ENCODE measurements at regions of chr12 and their contacts with region 1.

Region 1: DNA sequence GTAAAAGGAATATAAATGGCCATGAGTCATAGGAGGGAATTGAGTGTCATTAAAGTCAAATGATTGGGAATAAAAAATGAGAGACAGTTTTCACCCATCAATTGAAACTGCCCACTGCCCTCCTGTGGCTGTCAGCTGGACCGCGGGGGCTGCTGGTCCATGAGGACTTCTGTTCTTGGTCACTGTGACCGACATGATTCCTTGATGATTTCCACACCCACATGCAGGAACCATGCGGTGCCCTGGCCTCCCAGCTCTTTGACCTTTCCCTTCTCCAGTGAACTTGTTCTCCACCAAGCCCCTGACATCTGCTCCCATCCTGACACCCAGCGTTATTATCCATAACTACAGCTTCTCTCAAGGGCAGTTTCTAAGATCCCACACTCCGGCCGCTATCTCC is 48.4 kb downstream of the C12orf75 start:
- DNase-seq: no peak
- H3K4me3 ChIP-seq: no peak overlapping the region
- H3K27ac ChIP-seq: no peak overlapping the region
- H3K4me1 ChIP-seq: peaks cover 0 to 9% (median 8%) of the 10 kb centered on the region in 4 donors
- H3K27me3 ChIP-seq: no peaks in the 10 kb centered on the region
- CTCF ChIP-seq: peak in 1 of 2 experiments; percentile 20

Region 2: GRCh38 chr12:105221583-105222283 is 157.2 kb before region 1 on chr12:
- intact Hi-C with region 1: loop called (anchors 5 kb)
- DNase-seq: no peak
- H3K4me3 ChIP-seq: no peak overlapping the region
- H3K27ac ChIP-seq: no peak overlapping the region
- H3K4me1 ChIP-seq: peaks cover 0 to 84% (median 37%) of the 10 kb centered on the region in 4 donors
- H3K27me3 ChIP-seq: no peaks in the 10 kb centered on the region
- CTCF ChIP-seq: no peak